HepG2 (cell line): ENCODE measurements at regions of chr15 and their contacts with region 1.

Region 1: GRCh38 chr15:57527382-57528091 is 64.2 kb upstream of the MYZAP start:
- DNase-seq: peak; percentile 76
- ATAC-seq: peak; percentile 58
- H3K4me3 ChIP-seq: no peak overlapping the region
- H3K27ac ChIP-seq: no peak overlapping the region
- H3K4me1 ChIP-seq: no peaks in the 10 kb centered on the region
- H3K27me3 ChIP-seq: no peaks in the 10 kb centered on the region
- CTCF ChIP-seq: peak; percentile 83
- EP300 ChIP-seq: no peak
- POLR2A ChIP-seq: no peak
- RAD21 ChIP-seq: peak; percentile 81

Region 2: GRCh38 chr15:56821721-56822425 is 705.7 kb before region 1 on chr15:
- CTCF ChIA-PET with region 1: no interaction called
- POLR2A ChIA-PET with region 1: no interaction called
- in situ Hi-C with region 1: loop called (anchors 25 kb)
- intact Hi-C with region 1: no loop called
- DNase-seq: peak; percentile 43
- ATAC-seq: peak; percentile 93
- H3K4me3 ChIP-seq: no peak overlapping the region
- H3K27ac ChIP-seq: no peak overlapping the region
- H3K4me1 ChIP-seq: no peaks in the 10 kb centered on the region
- H3K27me3 ChIP-seq: no peaks in the 10 kb centered on the region
- CTCF ChIP-seq: peak; percentile 82
- EP300 ChIP-seq: no peak
- POLR2A ChIP-seq: no peak
- RAD21 ChIP-seq: peak; percentile 52; the same call in 1 of the 2 replicates

Region 3: DNA sequence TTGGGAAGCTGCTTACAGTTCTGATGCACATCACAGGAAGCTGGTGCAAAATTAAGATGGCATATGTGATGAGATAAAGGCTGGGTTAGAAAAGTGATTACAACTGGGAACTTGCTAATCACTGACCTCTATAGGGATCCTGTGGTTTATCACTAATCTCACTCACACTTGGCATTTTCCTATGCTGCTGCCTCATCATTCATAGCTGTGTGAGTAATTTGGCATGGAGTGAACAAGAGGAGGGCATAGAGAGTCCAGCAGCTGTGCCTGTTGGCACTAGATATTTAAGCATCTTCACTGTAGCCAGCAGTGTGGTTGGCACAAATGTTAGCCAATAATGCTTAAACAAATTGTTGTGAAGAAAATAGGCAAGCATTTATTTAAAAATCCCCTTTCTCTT is 368.9 kb before region 1 on chr15:
- CTCF ChIA-PET with region 1: no interaction called
- POLR2A ChIA-PET with region 1: no interaction called
- in situ Hi-C with region 1: loop called (anchors 25 kb)
- intact Hi-C with region 1: no loop called
- DNase-seq: no peak
- ATAC-seq: no peak
- H3K4me3 ChIP-seq: no peak overlapping the region
- H3K27ac ChIP-seq: no peak overlapping the region
- H3K4me1 ChIP-seq: peaks cover 2% of the 10 kb centered on the region; the same call in 1 of the 2 replicates
- H3K27me3 ChIP-seq: no peaks in the 10 kb centered on the region
- CTCF ChIP-seq: no peak
- EP300 ChIP-seq: no peak
- POLR2A ChIP-seq: no peak
- RAD21 ChIP-seq: no peak

Region 4: DNA sequence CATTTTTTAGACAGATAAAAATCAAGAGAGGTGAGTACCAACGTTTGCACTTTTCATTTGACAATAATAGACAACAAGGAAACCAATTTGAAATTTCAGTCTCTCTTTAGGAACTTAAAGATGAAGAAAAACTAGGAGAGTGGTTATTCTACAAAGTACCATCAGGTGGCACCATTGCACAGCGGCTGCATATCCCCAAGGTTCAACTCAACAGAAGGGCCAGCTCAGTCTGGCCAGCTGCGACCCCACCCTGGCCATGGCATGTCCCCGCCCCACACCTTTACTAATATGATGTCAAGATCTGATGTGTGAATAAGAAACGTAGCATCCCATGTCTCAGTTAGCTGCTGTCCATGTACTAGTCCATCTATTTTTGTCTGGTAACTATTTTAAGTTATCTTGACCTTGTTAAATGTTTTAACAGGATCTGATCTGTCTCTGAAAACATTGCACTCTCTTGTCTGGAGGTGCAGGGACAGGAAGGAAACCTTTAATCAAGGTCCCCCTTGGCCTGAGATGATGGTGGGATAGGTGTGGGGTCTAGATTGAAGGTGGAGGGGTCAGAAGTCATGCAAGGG is 186.8 kb before region 1 on chr15:
- CTCF ChIA-PET with region 1: interaction called, 61 read pairs
- POLR2A ChIA-PET with region 1: interaction called, 13 read pairs
- in situ Hi-C with region 1: no loop called
- intact Hi-C with region 1: loop called (anchors 1 kb)
- DNase-seq: peak; percentile 42
- ATAC-seq: peak; percentile 55
- H3K4me3 ChIP-seq: no peak overlapping the region
- H3K27ac ChIP-seq: no peak overlapping the region
- H3K4me1 ChIP-seq: peaks cover 45% of the 10 kb centered on the region
- H3K27me3 ChIP-seq: peaks cover 0 to 25% of the 10 kb centered on the region in 2 experiments; a peak in 3 of 5 replicates
- CTCF ChIP-seq: peak; percentile 84
- EP300 ChIP-seq: no peak
- POLR2A ChIP-seq: no peak
- RAD21 ChIP-seq: peak; percentile 91

Region 5: GRCh38 chr15:57375827-57376695 is 151.5 kb before region 1 on chr15 and contains the start of gene CGNL1:
- CTCF ChIA-PET with region 1: interaction called, 5 read pairs
- POLR2A ChIA-PET with region 1: no interaction called
- in situ Hi-C with region 1: no loop called
- intact Hi-C with region 1: loop called (anchors 1 kb)
- DNase-seq: peak; percentile 14
- ATAC-seq: peak; percentile 89
- H3K4me3 ChIP-seq: peak within 1 kb of the TSS; percentile 67 to 85 (median 76)
- H3K27ac ChIP-seq: peak within 1 kb of the TSS; percentile 55
- H3K4me1 ChIP-seq: peaks cover 53% of the 10 kb centered on the region
- H3K27me3 ChIP-seq: peaks cover 3 to 12% of the 10 kb centered on the region in 2 experiments; a peak in 2 of 5 replicates
- CTCF ChIP-seq: no peak
- EP300 ChIP-seq: no peak
- POLR2A ChIP-seq: peak in 1 of 2 experiments; percentile 50; a peak in 2 of 4 replicates
- RAD21 ChIP-seq: no peak
- total RNA-seq, gene CGNL1: 15.6 and 16.2 TPM in 2 replicates

Region 6: GRCh38 chr15:57476533-57476975 is 51.0 kb before region 1 on chr15:
- CTCF ChIA-PET with region 1: no interaction called
- POLR2A ChIA-PET with region 1: no interaction called
- in situ Hi-C with region 1: no loop called
- intact Hi-C with region 1: loop called (anchors 5 kb)
- DNase-seq: peak; percentile 21
- ATAC-seq: no peak
- H3K4me3 ChIP-seq: no peak overlapping the region
- H3K27ac ChIP-seq: peak overlapping the region; percentile 99
- H3K4me1 ChIP-seq: peaks cover 68% of the 10 kb centered on the region
- H3K27me3 ChIP-seq: no peaks in the 10 kb centered on the region
- CTCF ChIP-seq: no peak
- EP300 ChIP-seq: peak in 1 of 2 experiments; percentile 25; a peak in 1 of 4 replicates
- POLR2A ChIP-seq: no peak
- RAD21 ChIP-seq: no peak